SK-N-SH (cell line): ENCODE measurements at regions of chr12 and their contacts with region 1.

Region 1: GRCh38 chr12:108803428-108804105 is 53.8 kb downstream of the SSH1 start:
- DNase-seq: peak; percentile 86
- H3K4me3 ChIP-seq: peak overlapping the region in 1 of 2 experiments; percentile 36; a peak in 1 of 4 replicates
- H3K27ac ChIP-seq: peak overlapping the region; percentile 80 to 97
- H3K4me1 ChIP-seq: peaks cover 18 to 41% of the 10 kb centered on the region in 2 experiments
- H3K27me3 ChIP-seq: no peaks in the 10 kb centered on the region
- CTCF ChIP-seq: peak; percentile 92
- EP300 ChIP-seq: peak; percentile 24 to 34; a peak in 1 of 4 replicates
- RAD21 ChIP-seq: peak; percentile 98

Region 2: DNA sequence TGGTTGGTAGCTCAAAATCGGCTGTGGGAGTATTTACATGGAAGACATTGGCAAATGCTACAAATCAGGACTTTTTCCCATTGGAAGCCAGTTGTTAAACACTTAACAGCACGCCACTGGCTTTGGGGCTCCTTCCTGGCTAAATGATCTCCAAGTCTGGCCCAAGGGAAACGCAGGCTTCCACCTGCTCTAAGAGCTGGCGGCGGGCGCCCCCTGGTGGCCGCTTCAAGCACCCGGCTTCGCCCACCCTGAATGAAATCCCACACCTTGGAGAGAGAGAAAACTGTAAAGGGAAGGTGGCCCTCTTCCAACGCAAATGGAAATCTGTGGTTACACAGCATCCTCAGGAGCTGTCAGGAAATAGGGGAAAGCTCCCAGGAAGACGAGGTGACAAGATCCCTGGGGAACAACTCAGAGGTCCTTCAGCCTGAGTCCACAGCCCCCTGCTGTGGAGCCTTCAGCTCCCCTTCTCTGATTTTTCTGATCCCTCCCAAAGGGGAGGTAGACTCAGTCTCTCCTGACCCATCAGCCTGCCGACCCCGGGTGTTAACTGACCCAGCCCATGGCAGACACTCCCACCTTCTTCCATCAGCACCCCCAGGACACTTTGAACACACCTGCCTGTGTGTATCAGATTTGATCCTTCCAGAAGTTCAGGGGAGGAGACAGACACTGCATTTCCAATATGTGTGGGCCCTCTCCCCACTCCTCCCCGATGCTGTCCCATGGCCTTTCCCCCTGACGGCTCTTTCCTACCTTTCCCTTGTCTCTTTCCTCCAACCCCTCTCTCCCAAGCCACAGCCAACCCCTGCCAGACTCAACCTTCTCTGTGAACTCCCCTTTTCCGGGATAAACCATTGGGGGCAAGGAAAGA is 185.3 kb before region 1 on chr12:
- CTCF ChIA-PET with region 1: interaction called, 34 read pairs
- POLR2A ChIA-PET with region 1: no interaction called
- DNase-seq: peak; percentile 86
- H3K4me3 ChIP-seq: peak overlapping the region in 1 of 2 experiments; percentile 30; a peak in 1 of 4 replicates
- H3K27ac ChIP-seq: no peak overlapping the region
- H3K4me1 ChIP-seq: no peaks in the 10 kb centered on the region; a peak in 2 of 4 replicates
- H3K27me3 ChIP-seq: no peaks in the 10 kb centered on the region
- CTCF ChIP-seq: peak; percentile 98
- EP300 ChIP-seq: no peak
- RAD21 ChIP-seq: peak; percentile 99

Region 3: DNA sequence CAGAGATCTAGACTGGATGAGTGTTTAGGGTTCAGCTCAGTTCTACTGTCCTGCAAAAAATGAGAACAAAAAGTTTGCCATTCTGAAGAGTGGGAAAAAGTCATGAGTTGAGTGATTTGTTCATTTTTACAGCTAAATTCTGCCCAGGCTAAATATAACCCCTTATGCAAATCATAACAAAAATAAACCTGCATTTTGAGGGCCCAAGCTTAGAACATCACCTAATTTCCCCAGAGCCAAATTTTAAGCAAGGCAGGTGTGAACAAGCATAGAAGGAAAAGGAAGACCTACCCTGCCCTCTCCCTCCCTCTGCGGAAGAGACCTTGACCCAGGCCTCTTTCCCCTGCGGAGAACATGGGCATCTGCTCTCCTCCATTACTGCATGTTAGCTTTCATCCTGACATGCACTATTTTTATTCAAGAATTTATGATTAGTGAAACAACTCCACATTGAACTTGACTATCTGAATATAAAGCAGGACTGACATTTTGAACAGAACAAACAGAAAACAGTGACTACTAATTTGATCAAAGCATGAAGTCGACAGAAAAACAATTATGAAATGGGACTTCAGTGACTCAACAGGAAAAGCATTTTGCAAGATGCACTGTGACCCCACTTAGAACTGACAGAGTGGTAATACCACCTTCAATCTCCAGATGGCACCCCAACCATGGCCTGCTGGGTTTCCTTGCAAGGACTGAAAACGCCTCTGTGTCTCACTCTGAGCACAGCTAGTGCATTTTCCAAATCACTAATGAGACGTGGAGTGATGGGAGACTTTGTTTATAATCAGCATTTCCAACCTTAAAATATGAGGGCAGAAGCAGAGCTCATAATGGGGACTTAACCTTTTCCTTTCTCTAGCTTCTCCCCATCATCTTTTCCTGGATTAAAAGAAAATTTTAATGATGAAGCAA is 139.0 kb before region 1 on chr12:
- CTCF ChIA-PET with region 1: interaction called, 327 read pairs
- POLR2A ChIA-PET with region 1: no interaction called
- DNase-seq: peak; percentile 78
- H3K4me3 ChIP-seq: no peak overlapping the region; a peak in 1 of 4 replicates
- H3K27ac ChIP-seq: peak overlapping the region; percentile 84 to 91
- H3K4me1 ChIP-seq: peaks cover 46 to 61% of the 10 kb centered on the region in 2 experiments
- H3K27me3 ChIP-seq: no peaks in the 10 kb centered on the region
- CTCF ChIP-seq: peak; percentile 93
- EP300 ChIP-seq: peak in 1 of 2 experiments; percentile 18; a peak in 1 of 4 replicates
- RAD21 ChIP-seq: peak; percentile 100

Region 4: GRCh38 chr12:108784270-108784669 is 19.3 kb before region 1 on chr12:
- CTCF ChIA-PET with region 1: interaction called, 38 read pairs
- POLR2A ChIA-PET with region 1: no interaction called
- DNase-seq: no peak
- H3K4me3 ChIP-seq: no peak overlapping the region
- H3K27ac ChIP-seq: no peak overlapping the region
- H3K4me1 ChIP-seq: no peaks in the 10 kb centered on the region
- H3K27me3 ChIP-seq: no peaks in the 10 kb centered on the region
- CTCF ChIP-seq: no peak
- EP300 ChIP-seq: no peak
- RAD21 ChIP-seq: no peak

Region 5: GRCh38 chr12:108838194-108839017 is 34.8 kb after region 1 on chr12:
- CTCF ChIA-PET with region 1: interaction called, 10 read pairs
- POLR2A ChIA-PET with region 1: no interaction called
- DNase-seq: peak; percentile 64
- H3K4me3 ChIP-seq: no peak overlapping the region
- H3K27ac ChIP-seq: peak overlapping the region; percentile 98 to 100
- H3K4me1 ChIP-seq: peaks cover 36 to 63% of the 10 kb centered on the region in 2 experiments
- H3K27me3 ChIP-seq: no peaks in the 10 kb centered on the region
- CTCF ChIP-seq: no peak
- EP300 ChIP-seq: peak; percentile 79 to 99
- RAD21 ChIP-seq: no peak

Region 6: GRCh38 chr12:108950991-108951739 is 147.6 kb after region 1 on chr12:
- CTCF ChIA-PET with region 1: interaction called, 10 read pairs
- POLR2A ChIA-PET with region 1: no interaction called
- DNase-seq: peak; percentile 53
- H3K4me3 ChIP-seq: no peak overlapping the region; a peak in 1 of 4 replicates
- H3K27ac ChIP-seq: no peak overlapping the region
- H3K4me1 ChIP-seq: peaks cover 0 to 3% of the 10 kb centered on the region in 2 experiments; a peak in 1 of 4 replicates
- H3K27me3 ChIP-seq: no peaks in the 10 kb centered on the region
- CTCF ChIP-seq: peak; percentile 89
- EP300 ChIP-seq: peak in 1 of 2 experiments; percentile 10; a peak in 1 of 4 replicates
- RAD21 ChIP-seq: peak; percentile 87